Activated B cell treated with CpG ODN at 0.5 μM for 24 hours (primary cell): ENCODE measurements at regions of chr4 and their contacts with region 1.

Region 1: DNA sequence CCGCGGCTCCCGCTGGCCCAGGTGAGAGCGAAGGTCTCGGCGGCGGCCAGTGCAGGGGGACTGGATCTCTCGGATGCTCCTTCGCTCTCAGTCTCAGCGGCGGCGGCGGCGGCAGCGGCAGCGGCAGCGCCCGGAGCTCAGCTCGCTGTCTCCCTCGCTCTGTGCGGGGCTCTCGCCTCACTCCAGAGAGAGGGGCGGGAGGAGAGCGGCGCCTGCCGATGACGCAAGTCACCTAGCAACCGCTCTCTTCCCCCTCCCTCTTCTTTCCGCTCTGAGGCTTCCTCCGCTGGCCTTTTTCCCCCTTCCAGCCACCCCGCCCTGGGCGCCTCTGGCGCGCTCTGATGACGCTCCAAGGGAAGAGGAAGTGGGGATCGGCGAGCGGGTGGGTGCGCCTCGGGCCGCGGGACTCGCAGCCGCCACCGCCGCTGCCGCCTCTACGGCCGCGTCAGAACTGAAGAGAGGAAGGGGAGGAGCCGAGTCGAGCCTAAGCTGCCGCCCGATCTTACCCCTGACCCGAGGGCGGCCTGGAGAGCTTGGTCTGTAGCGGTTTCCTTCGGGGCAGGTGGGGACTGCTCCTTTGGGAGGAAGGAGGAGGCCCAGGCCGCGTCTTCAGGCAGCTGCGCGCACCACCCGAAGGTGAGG is at the start of gene FBXW7:
- DNase-seq: peak; percentile 99
- ATAC-seq: peak; percentile 85
- H3K4me3 Mint-ChIP-seq: peak within 1 kb of the TSS; percentile 99
- H3K27ac Mint-ChIP-seq: peak within 1 kb of the TSS; percentile 98
- H3K4me1 Mint-ChIP-seq: peaks cover 72% of the 10 kb centered on the region
- H3K27me3 Mint-ChIP-seq: no peaks in the 10 kb centered on the region
- CTCF ChIP-seq: no peak
- total RNA-seq, gene FBXW7: 96.5 and 102 TPM in 2 replicates

Region 2: DNA sequence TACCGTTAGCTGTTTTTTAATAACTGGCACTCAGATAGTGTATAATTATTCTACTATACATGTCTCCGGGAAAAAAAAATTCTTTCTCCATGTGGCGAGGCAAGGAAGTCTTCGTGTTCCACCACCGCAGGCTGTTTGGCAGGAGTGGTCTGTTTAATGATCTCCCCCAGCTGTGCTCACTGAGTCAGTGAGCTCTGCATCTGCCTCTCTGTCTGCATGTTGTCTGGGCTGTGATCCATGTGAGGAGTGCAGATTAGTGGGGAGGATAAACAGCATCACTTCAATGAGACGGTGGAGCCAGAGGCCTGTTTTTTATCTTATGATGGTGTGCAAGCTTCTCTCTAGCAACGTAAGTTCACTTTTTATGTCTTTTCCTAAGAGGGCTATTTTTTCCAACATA is 1366.8 kb before region 1 on chr4:
- CTCF ChIA-PET with region 1: no interaction called
- POLR2A ChIA-PET with region 1: no interaction called
- intact Hi-C with region 1: no loop called
- DNase-seq: no peak
- ATAC-seq: no peak
- H3K4me3 Mint-ChIP-seq: no peak overlapping the region
- H3K27ac Mint-ChIP-seq: no peak overlapping the region
- H3K4me1 Mint-ChIP-seq: no peaks in the 10 kb centered on the region
- H3K27me3 Mint-ChIP-seq: peaks cover 15% of the 10 kb centered on the region
- CTCF ChIP-seq: no peak

Region 3: GRCh38 chr4:152500800-152501434 is 35.1 kb before region 1 on chr4:
- CTCF ChIA-PET with region 1: interaction called, 20 read pairs
- POLR2A ChIA-PET with region 1: interaction called, 53 read pairs
- intact Hi-C with region 1: loop called (anchors 1 kb)
- DNase-seq: no peak
- ATAC-seq: peak; percentile 79
- H3K4me3 Mint-ChIP-seq: peak overlapping the region; percentile 44
- H3K27ac Mint-ChIP-seq: peak overlapping the region; percentile 83
- H3K4me1 Mint-ChIP-seq: peaks cover 29% of the 10 kb centered on the region
- H3K27me3 Mint-ChIP-seq: no peaks in the 10 kb centered on the region
- CTCF ChIP-seq: peak; percentile 84

Region 4: GRCh38 chr4:152525873-152526272 is 10.2 kb before region 1 on chr4:
- CTCF ChIA-PET with region 1: no interaction called
- POLR2A ChIA-PET with region 1: interaction called, 25 read pairs
- intact Hi-C with region 1: loop called (anchors 1 kb)
- DNase-seq: no peak
- ATAC-seq: peak; percentile 31
- H3K4me3 Mint-ChIP-seq: peak overlapping the region; percentile 11
- H3K27ac Mint-ChIP-seq: no peak overlapping the region
- H3K4me1 Mint-ChIP-seq: peaks cover 65% of the 10 kb centered on the region
- H3K27me3 Mint-ChIP-seq: no peaks in the 10 kb centered on the region
- CTCF ChIP-seq: no peak

Region 5: GRCh38 chr4:152591396-152591795 is 55.4 kb after region 1 on chr4:
- CTCF ChIA-PET with region 1: no interaction called
- POLR2A ChIA-PET with region 1: no interaction called
- intact Hi-C with region 1: loop called (anchors 1 kb)
- DNase-seq: no peak
- ATAC-seq: peak; percentile 42
- H3K4me3 Mint-ChIP-seq: no peak overlapping the region
- H3K27ac Mint-ChIP-seq: no peak overlapping the region
- H3K4me1 Mint-ChIP-seq: peaks cover 17% of the 10 kb centered on the region
- H3K27me3 Mint-ChIP-seq: peaks cover 4% of the 10 kb centered on the region
- CTCF ChIP-seq: no peak

Region 6: GRCh38 chr4:152779513-152780266 is 243.7 kb after region 1 on chr4 and contains the starts of genes ARFIP1 and TIGD4:
- CTCF ChIA-PET with region 1: no interaction called
- POLR2A ChIA-PET with region 1: interaction called, 4 read pairs
- intact Hi-C with region 1: loop called (anchors 1 kb)
- DNase-seq: peak; percentile 93
- ATAC-seq: peak; percentile 88
- H3K4me3 Mint-ChIP-seq: peak within 1 kb of the TSS; percentile 97
- H3K27ac Mint-ChIP-seq: peak within 1 kb of the TSS; percentile 92
- H3K4me1 Mint-ChIP-seq: peaks cover 41% of the 10 kb centered on the region
- H3K27me3 Mint-ChIP-seq: no peaks in the 10 kb centered on the region
- CTCF ChIP-seq: no peak
- total RNA-seq, gene ARFIP1: 16.8 and 19.5 TPM in 2 replicates
- total RNA-seq, gene TIGD4: 0.24 and 0.44 TPM in 2 replicates